IMR-90 (cell line): ENCODE measurements at regions of chrX and their contacts with region 1.

Region 1: GRCh38 chrX:7269991-7270390 is 122.0 kb upstream of the PUDP start:
- DNase-seq: peak; percentile 58
- ATAC-seq: peak; percentile 85
- H3K4me3 ChIP-seq: no peak overlapping the region
- H3K27ac ChIP-seq: peak overlapping the region; percentile 96
- H3K4me1 ChIP-seq: peaks cover 8% of the 10 kb centered on the region
- H3K27me3 ChIP-seq: no peaks in the 10 kb centered on the region
- CTCF ChIP-seq: no peak
- POLR2A ChIP-seq: no peak
- RAD21 ChIP-seq: no peak

Region 2: GRCh38 chrX:7316887-7317286 is 46.9 kb after region 1 on chrX:
- CTCF ChIA-PET with region 1: no interaction called
- POLR2A ChIA-PET with region 1: no interaction called
- dilution Hi-C with region 1: no loop called
- in situ Hi-C with region 1: no loop called
- intact Hi-C with region 1: loop called (anchors 5 kb)
- DNase-seq: peak; percentile 57
- ATAC-seq: peak; percentile 53
- H3K4me3 ChIP-seq: no peak overlapping the region
- H3K27ac ChIP-seq: no peak overlapping the region
- H3K4me1 ChIP-seq: peaks cover 9% of the 10 kb centered on the region
- H3K27me3 ChIP-seq: no peaks in the 10 kb centered on the region
- CTCF ChIP-seq: no peak
- POLR2A ChIP-seq: no peak
- RAD21 ChIP-seq: no peak

Region 3: DNA sequence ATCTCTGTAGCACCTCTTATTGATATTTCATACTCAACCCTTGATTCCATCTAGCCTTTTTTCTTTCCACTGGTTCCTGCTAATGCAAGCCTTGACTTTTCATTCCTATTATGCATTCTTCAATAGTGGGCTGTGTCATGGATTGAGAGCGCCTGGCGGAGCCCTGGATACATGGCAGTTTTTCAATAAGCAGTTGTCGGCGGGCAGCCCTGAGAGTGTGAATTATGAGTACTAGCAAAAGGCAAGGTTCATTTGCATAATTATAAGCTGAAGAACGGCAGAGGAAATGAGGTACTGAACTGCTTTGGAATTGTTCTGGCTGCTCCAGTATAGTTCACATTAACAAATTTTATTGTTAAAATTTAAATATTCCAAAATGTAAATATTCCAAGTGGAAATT is 233.3 kb after region 1 on chrX:
- CTCF ChIA-PET with region 1: no interaction called
- POLR2A ChIA-PET with region 1: no interaction called
- dilution Hi-C with region 1: no loop called
- in situ Hi-C with region 1: no loop called
- intact Hi-C with region 1: no loop called
- DNase-seq: no peak
- ATAC-seq: no peak
- H3K4me3 ChIP-seq: no peak overlapping the region
- H3K27ac ChIP-seq: no peak overlapping the region
- H3K4me1 ChIP-seq: no peaks in the 10 kb centered on the region
- H3K27me3 ChIP-seq: no peaks in the 10 kb centered on the region
- CTCF ChIP-seq: no peak
- POLR2A ChIP-seq: no peak
- RAD21 ChIP-seq: no peak